Right cardiac atrium (tissue), 5 donors: ENCODE measurements at regions of chr11 and their contacts with region 1.

Region 1: DNA sequence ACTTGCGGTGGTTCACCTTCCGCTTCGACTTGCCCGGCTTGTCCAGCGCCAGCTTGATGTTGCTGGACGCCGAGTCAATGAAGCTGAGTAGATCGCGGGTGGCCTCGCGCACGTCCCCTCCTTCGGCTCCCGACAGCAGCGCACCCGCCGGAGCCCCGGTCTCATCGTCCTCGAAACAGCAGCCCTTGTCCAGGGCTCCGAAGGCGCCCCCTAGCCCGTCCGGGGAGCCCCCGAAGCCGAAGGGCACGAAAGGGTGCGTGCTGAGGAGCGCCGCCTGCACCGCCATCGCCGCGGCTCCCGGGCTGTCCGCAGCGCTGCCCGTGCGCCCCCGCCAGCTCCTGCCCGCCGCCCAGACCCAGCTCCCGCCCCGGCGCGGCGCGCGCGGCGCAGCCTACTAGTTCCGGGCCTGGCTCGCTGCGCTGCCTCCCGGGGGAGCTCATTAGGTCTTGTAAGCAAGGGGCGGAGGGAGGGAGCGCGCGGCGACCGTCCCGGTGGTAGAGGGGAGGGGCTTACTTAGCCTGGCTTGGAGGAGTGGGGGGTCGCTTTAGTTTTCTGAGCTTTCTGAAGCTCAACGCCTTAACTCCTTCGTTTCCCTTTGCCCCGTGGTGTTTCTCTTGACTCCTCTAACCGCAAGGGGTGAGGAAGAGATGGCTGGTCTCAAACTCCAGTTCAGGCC is at the start of gene FAM181B:
- DNase-seq: peak; percentile 74 to 90 (median 87)
- ATAC-seq: peak; percentile 90 to 92
- H3K4me3 ChIP-seq: peak within 1 kb of the TSS; percentile 52
- H3K27ac ChIP-seq: peak within 1 kb of the TSS; percentile 4
- H3K4me1 ChIP-seq: no peaks in the 10 kb centered on the region
- H3K27me3 ChIP-seq: no peaks in the 10 kb centered on the region
- total RNA-seq, gene FAM181B: 4.2 to 8.4 (median 5.0) TPM

Region 2: DNA sequence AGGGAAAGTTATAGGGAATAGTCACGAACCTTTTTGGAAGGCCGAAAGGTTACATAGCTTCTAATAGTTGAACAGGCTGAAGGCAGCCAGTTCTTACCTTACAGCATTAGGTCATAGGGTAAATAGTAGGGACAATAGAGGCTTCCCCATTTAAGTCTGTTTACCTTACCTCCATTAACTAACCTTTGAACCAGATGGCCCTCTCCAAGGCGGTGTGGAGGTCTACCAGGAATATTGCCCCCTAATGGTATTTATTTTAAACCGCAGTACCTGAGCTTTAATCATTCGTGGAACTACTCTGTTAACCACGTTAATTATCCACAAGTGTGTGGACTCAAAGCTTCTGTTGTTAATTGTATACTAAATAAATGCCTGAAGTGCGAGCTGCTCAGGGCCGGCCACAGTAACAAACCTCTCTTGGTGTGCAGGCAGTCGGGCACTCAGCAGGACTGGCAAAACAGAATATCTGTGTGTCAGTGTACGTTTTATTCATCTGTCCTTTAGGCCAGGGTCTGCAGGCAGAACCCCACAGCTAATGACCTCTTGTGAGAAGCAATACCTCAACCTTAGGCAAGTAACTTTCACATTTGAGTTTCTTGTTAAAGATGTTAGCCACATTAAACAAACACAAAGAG is 84.9 kb after region 1 on chr11:
- intact Hi-C with region 1: loop called in 1 of 4 experiments (anchors 10 kb)
- DNase-seq: no peak
- ATAC-seq: no peak
- H3K4me3 ChIP-seq: no peak overlapping the region
- H3K27ac ChIP-seq: no peak overlapping the region
- H3K4me1 ChIP-seq: no peaks in the 10 kb centered on the region
- H3K27me3 ChIP-seq: no peaks in the 10 kb centered on the region

Region 3: DNA sequence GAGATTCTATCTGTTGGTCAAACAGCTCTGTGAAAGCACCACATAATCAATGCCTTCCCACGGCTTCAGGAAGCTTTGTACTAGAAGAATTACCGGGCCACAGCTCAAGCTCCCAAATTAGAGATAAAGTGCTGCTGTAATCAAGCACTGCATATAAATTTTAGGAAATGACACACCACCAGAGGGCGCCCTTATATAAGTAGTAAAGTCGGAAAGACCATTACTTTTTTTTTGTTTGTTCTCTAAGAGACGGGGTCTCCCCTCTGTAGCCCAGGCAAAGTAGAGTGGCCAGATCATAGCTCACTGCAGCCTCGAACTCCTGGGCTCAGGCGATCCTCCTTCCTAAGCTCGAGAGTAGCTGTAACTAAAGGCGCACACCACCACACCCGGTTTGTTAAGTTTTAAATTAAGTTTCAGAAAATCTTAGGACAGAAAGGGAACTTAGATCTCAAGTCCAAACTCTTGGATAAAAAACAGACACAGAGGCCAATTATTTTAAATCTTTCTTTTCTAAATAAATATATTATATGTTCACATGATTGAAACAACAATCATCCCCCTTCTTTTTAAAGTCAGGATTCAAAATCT is 134.0 kb after region 1 on chr11:
- intact Hi-C with region 1: loop called in 2 of 4 experiments (anchors 10 kb)
- DNase-seq: peak; percentile 52 to 86 (median 69)
- ATAC-seq: peak; percentile 44 to 65
- H3K4me3 ChIP-seq: peak overlapping the region; percentile 43
- H3K27ac ChIP-seq: no peak overlapping the region
- H3K4me1 ChIP-seq: peaks cover 6% of the 10 kb centered on the region
- H3K27me3 ChIP-seq: no peaks in the 10 kb centered on the region